Ovary (tissue), 10 donors: ENCODE measurements at regions of chr12 and their contacts with region 1.

Region 1: DNA sequence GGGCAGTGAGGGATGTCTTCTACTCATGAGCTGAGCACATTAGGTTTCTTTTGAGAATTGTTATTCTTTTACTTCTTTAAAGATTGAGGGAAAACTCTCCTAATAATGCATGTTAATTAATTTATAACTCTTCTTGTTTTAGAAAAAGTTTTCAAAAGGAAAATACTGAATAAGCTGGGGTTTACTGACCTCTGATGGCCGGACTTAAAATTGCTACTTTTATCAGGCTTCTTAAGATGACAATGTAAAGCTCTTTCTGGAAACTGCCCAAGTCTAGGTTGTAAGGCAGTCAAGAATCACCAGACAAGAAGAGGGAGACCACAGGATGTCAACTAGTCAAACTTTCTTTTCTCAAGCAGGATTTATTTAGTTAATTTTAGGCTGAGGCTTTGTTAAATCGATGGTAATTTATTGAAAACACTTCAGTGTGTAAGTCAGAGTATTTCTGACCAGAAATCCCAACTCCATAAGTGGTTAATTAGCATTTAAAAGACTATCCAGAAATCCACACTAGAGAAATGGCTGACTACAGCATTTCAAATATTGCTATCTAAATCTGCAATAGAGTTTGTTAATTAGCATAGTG is 82.1 kb downstream of the AVPR1A start:
- DNase-seq: no peak
- H3K4me3 ChIP-seq: no peak overlapping the region
- H3K27ac ChIP-seq: no peak overlapping the region
- H3K4me1 ChIP-seq: no peaks in the 10 kb centered on the region
- H3K27me3 ChIP-seq: no peaks in the 10 kb centered on the region
- CTCF ChIP-seq: peak in 1 of 3 donors; percentile 48
- EP300 ChIP-seq: no peak
- POLR2A ChIP-seq: no peak

Region 2: DNA sequence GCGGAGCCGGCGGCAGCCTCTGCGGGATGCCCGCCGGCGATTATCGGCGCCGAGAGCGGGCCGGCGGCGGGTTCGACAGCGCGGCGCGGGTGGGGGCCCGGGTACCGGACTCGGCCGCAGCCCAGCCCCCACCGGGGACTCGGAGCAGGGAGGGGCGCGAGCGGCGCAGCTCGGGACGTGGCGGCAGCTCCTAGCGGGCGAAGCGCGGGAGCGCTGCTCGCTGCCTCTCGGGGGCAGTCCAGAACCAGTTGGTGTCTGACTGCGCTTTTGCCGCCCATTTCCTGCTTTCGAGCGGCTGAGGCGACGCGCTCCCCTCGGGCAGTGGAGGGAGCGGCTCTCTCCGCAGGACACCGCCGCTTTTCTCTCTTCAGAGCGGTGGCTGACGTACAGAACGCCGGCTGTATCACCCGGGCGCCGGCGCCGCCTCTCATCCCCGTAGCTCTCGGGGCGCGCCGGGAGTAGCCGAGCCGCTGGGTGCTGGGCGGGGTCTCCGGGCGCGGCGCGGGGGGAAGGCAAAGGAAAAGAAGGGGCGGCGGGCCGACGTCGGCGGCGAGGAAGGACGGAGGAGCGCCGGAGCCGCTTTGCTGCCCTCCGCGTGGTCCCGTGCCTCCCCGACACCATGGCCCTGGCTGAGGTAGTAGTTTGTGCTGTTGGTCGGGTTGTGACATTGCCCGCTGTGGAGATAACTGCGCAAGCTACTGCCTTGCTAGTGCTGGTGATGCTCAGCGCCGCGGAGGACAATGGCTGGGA is 465.7 kb before region 1 on chr12:
- intact Hi-C with region 1: loop called in 1 of 4 experiments (anchors 10 kb)
- DNase-seq: peak; percentile 86 to 91 (median 90)
- H3K4me3 ChIP-seq: peak overlapping the region; percentile 54
- H3K27ac ChIP-seq: peak overlapping the region; percentile 98 to 100
- H3K4me1 ChIP-seq: peaks cover 1% of the 10 kb centered on the region
- H3K27me3 ChIP-seq: no peaks in the 10 kb centered on the region
- CTCF ChIP-seq: peak; percentile 29 to 81 (median 64)
- EP300 ChIP-seq: no peak
- POLR2A ChIP-seq: peak; percentile 1

Region 3: DNA sequence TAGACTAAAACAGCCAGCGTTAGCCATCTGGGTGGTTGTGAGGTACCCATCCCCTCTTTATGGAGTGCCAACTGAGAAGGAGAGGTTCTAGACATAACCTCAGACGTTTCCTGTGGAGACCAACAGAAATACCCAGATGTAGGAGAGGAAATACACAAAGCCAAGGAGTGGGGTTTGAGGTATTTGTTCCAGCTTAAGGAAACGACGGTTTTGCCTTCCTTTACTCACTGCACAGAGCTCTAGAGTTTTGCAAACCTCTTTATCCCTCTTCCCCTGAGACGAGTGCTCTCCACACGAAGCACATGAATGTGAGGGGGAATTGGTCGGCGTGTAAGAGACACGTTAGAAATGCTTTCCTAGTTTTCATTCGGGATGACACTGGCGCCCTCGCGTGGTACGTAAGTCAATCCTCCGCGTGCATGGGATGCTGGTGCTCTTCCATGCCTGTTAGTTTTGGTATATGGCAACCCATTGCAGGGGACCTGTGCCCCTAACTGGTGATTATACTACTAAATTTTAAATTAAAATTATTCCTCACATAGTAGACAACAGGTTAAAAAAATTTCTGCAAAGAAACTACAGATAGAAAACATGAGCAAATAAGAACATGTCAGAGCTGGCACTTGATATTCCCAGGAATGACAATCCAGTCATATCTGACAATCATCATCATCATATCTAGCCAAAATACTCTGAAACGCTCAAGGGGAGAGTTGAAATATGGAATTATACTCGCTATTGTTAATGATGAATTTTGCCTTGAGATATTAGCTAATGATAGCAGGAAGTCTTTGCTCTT is 255.7 kb before region 1 on chr12:
- intact Hi-C with region 1: loop called in 2 of 4 experiments (anchors 5 to 10 kb)
- DNase-seq: peak; percentile 51 to 84 (median 61)
- H3K4me3 ChIP-seq: no peak overlapping the region
- H3K27ac ChIP-seq: no peak overlapping the region
- H3K4me1 ChIP-seq: no peaks in the 10 kb centered on the region
- H3K27me3 ChIP-seq: no peaks in the 10 kb centered on the region
- CTCF ChIP-seq: peak; percentile 4 to 16 (median 6)
- EP300 ChIP-seq: no peak
- POLR2A ChIP-seq: no peak

Region 4: DNA sequence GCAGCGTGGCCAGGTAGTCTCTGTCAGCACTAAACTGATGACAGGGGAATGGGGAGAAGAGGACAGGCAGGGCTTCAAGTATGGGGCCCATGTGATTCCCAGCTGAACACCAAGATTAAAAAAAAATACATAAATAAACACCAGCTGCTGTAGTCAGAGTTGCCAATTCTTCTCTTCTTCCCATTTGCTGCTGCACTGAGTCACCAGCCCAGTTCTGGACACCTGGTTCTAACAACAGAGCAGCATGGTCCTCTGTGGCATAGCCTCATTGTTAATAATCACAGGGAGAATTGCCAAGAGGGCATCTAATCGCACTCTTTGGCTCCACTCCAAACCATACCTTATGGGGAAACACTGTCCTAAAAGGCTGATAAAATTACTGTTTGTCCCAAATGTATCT is 149.1 kb before region 1 on chr12:
- intact Hi-C with region 1: loop called in 1 of 4 experiments (anchors 10 kb)
- DNase-seq: peak in 4 of 5 donors; percentile 21 to 44 (median 36)
- H3K4me3 ChIP-seq: no peak overlapping the region
- H3K27ac ChIP-seq: no peak overlapping the region
- H3K4me1 ChIP-seq: peaks cover 7% of the 10 kb centered on the region
- H3K27me3 ChIP-seq: no peaks in the 10 kb centered on the region
- CTCF ChIP-seq: no peak
- EP300 ChIP-seq: no peak
- POLR2A ChIP-seq: no peak

Region 5: DNA sequence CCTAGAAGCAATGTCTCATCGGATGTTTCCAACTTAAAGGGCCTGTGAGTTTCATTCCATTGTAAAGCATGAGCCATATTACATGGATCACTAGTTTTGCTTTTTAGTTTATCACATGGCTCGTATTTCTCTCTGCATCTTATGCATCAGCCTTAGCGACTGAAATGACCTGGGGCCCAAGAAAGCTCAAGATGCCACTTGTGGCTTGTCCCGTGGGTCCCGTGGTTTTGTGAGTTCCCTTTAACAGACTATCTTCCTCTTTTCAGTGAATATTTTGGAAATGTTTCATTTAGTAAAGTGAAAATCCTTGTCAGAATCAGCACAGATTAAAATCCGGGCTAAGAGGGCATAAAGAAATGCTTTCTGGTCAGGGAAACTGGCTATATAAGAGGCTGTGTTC is 47.8 kb before region 1 on chr12:
- intact Hi-C with region 1: no loop called
- DNase-seq: no peak
- H3K4me3 ChIP-seq: no peak overlapping the region
- H3K27ac ChIP-seq: no peak overlapping the region
- H3K4me1 ChIP-seq: no peaks in the 10 kb centered on the region
- H3K27me3 ChIP-seq: no peaks in the 10 kb centered on the region
- CTCF ChIP-seq: no peak
- EP300 ChIP-seq: no peak
- POLR2A ChIP-seq: no peak